ENCODE measurements at regions of chr3 and their contacts with region 1.

Region 1: GRCh38 chr3:170811928-170812591 is 57.9 kb downstream of the RPL22L1 start:
- DNase-seq: peak; percentile 83 to 90 (median 87)
- ATAC-seq: peak; percentile 83
- H3K4me3 ChIP-seq: no peak overlapping the region
- H3K27ac ChIP-seq: no peak overlapping the region
- H3K4me1 ChIP-seq: peaks cover 21 to 48% of the 10 kb centered on the region in 2 experiments
- H3K27me3 ChIP-seq: no peaks in the 10 kb centered on the region
- CTCF ChIP-seq: peak; percentile 91 to 99 (median 98)
- EP300 ChIP-seq: peak; percentile 41; the same call in 1 of the 2 replicates
- POLR2A ChIP-seq: no peak
- RAD21 ChIP-seq: peak; percentile 97 to 98

Region 2: DNA sequence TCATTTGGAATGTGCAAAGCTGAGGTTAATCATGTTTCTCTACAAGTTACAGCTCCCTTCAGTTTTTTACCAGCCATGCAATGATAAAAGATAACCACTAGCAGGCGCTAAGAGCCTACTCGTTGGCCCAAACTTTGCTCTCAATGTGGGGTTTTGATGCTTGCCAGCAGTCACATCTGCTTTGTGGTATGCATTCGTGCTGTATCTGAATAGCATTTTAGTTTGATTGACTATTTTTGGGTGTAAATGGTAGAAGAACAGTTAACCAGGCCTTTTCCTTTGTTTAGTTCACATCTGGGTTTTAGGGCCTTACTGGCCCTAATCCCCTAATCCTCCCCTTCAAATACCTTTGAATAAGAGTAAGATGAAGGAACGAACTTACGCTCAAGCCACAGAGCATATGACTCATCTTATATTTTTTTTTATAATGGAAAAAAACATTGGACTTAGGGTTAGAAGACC is 397.8 kb before region 1 on chr3:
- CTCF ChIA-PET with region 1: interaction called, 13 read pairs
- POLR2A ChIA-PET with region 1: interaction called, 5 read pairs
- in situ Hi-C with region 1: no loop called
- intact Hi-C with region 1: loop called (anchors 1 kb)
- DNase-seq: peak; percentile 58 to 75 (median 63)
- ATAC-seq: peak; percentile 85
- H3K4me3 ChIP-seq: no peak overlapping the region
- H3K27ac ChIP-seq: no peak overlapping the region
- H3K4me1 ChIP-seq: peaks cover 0 to 9% of the 10 kb centered on the region in 2 experiments; a peak in 1 of 5 replicates
- H3K27me3 ChIP-seq: no peaks in the 10 kb centered on the region
- CTCF ChIP-seq: peak; percentile 91 to 98 (median 93)
- EP300 ChIP-seq: no peak
- POLR2A ChIP-seq: no peak
- RAD21 ChIP-seq: peak; percentile 99

Region 3: DNA sequence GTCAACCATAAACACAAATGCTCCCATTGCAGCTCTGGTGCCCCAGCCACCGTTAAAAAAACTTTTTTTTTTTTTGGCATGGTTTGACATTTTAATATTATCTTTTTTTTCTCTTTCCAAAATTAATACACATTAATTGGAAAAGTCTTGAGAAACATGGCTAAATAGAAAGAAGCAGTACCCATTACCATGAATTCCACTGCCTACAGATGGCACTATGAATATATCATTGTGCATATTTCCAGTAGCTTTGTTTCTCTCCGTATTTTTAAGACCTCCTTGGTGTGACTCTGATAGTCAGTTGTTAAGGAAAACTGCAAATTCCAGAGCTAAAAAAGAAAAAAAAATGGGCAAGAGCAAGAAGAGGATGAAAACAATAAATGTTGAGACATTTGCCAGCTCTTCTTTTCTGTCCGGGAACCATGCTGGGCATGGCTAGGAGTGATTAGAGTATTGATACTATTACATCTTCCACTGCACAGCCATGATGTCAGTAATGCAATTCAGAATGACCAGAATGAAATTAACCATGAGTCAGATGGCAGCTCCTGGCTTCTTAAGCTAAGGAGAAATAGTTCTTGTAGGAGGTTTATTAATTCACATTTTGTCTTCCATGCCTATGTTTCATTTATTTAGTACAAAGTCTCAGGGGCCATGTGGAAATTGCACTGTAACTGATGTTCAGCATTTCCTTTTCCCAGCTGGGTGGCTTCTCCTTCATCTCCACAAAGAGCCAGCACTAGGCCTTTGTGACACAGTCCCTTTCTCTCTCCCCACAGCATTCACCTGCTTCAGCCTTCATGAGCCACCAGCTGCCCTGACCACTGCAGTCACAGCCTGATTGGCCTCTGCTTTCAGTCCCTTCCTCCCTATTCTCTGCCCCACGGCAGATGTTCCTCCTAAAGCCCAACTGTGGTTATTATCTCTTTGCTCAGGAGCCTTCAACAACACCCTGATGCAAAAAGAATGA is 258.0 kb before region 1 on chr3:
- CTCF ChIA-PET with region 1: interaction called, 3 read pairs
- POLR2A ChIA-PET with region 1: no interaction called
- in situ Hi-C with region 1: no loop called
- intact Hi-C with region 1: loop called (anchors 5 kb)
- DNase-seq: no peak
- ATAC-seq: no peak
- H3K4me3 ChIP-seq: no peak overlapping the region
- H3K27ac ChIP-seq: no peak overlapping the region
- H3K4me1 ChIP-seq: no peaks in the 10 kb centered on the region
- H3K27me3 ChIP-seq: no peaks in the 10 kb centered on the region
- CTCF ChIP-seq: peak in 1 of 3 experiments; percentile 36; a peak in 2 of 6 replicates
- EP300 ChIP-seq: no peak
- POLR2A ChIP-seq: no peak
- RAD21 ChIP-seq: peak; percentile 33 to 40; a peak in 3 of 4 replicates

Region 4: GRCh38 chr3:170697908-170698307 is 114.2 kb before region 1 on chr3:
- CTCF ChIA-PET with region 1: no interaction called
- POLR2A ChIA-PET with region 1: interaction called, 3 read pairs
- in situ Hi-C with region 1: loop called (anchors 5 kb)
- intact Hi-C with region 1: loop called (anchors 2 kb)
- DNase-seq: no peak
- ATAC-seq: no peak
- H3K4me3 ChIP-seq: no peak overlapping the region
- H3K27ac ChIP-seq: no peak overlapping the region
- H3K4me1 ChIP-seq: peaks cover 0 to 51% of the 10 kb centered on the region in 2 experiments; a peak in 3 of 5 replicates
- H3K27me3 ChIP-seq: no peaks in the 10 kb centered on the region
- CTCF ChIP-seq: no peak
- EP300 ChIP-seq: no peak
- POLR2A ChIP-seq: no peak
- RAD21 ChIP-seq: no peak

Region 5: GRCh38 chr3:170768334-170768801 is 43.7 kb before region 1 on chr3:
- CTCF ChIA-PET with region 1: no interaction called
- POLR2A ChIA-PET with region 1: no interaction called
- in situ Hi-C with region 1: no loop called
- intact Hi-C with region 1: loop called (anchors 5 kb)
- DNase-seq: no peak
- ATAC-seq: peak; percentile 44
- H3K4me3 ChIP-seq: no peak overlapping the region
- H3K27ac ChIP-seq: peak overlapping the region; percentile 43; the same call in 2 of the 3 replicates
- H3K4me1 ChIP-seq: peaks cover 24 to 42% of the 10 kb centered on the region in 2 experiments
- H3K27me3 ChIP-seq: no peaks in the 10 kb centered on the region
- CTCF ChIP-seq: no peak
- EP300 ChIP-seq: no peak
- POLR2A ChIP-seq: no peak
- RAD21 ChIP-seq: peak in 1 of 2 experiments; percentile 29; a peak in 1 of 4 replicates

Region 6: DNA sequence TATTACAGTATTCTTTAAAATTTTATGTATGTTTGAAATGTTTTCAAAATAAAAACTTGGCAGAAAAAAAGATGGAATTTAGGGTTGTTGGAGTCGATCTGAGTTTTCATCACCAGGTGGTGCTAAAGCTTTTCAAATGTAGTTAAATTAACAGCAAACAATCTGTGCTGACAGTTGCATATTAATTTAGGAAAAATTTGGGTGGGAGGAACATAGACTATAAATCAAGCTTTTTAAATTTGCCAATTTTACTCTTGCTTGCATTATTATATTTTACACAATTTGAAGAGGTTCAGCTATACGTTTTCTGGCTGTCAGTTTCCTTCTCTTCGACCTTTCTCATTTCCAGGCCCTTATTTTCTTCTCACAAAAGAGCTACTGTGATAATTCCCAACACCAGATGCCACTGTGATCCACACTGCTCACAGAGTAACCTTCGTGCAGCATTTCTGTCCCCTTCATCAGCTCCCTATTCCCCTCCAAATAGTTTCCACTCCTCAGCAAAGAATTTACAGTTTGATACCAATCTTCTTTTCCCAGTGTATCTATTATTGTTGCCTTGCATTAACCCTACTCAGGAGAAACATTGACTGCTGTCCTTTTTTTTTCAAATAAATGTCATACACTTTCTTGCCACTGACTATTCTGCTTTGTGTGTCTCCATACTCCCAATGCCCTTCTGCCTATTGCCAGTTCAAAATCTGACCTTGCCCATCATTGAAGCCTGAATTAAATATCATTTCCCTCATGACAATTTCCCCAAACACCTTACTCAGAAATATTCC is 149.7 kb after region 1 on chr3:
- CTCF ChIA-PET with region 1: no interaction called
- POLR2A ChIA-PET with region 1: no interaction called
- in situ Hi-C with region 1: no loop called
- intact Hi-C with region 1: no loop called
- DNase-seq: peak in 3 of 4 experiments; percentile 15 to 52 (median 15)
- ATAC-seq: peak; percentile 51; the same call in 1 of the 3 replicates
- H3K4me3 ChIP-seq: no peak overlapping the region
- H3K27ac ChIP-seq: no peak overlapping the region
- H3K4me1 ChIP-seq: no peaks in the 10 kb centered on the region
- H3K27me3 ChIP-seq: no peaks in the 10 kb centered on the region
- CTCF ChIP-seq: peak; percentile 29 to 78 (median 49); a peak in 4 of 6 replicates
- EP300 ChIP-seq: no peak
- POLR2A ChIP-seq: no peak
- RAD21 ChIP-seq: peak; percentile 89 to 91